Activated CD4-positive, alpha-beta memory T cell treated with anti-CD3 and anti-CD28 coated beads for 36 hours (primary cell): ENCODE measurements at regions of chr5 and their contacts with region 1.

Region 1: GRCh38 chr5:80754900-80755299 is 100.1 kb upstream of the DHFR start:
- DNase-seq: peak; percentile 66
- H3K4me3 Mint-ChIP-seq: peak overlapping the region; percentile 45
- H3K27ac Mint-ChIP-seq: peak overlapping the region; percentile 71
- H3K4me1 Mint-ChIP-seq: peaks cover 54% of the 10 kb centered on the region
- H3K27me3 Mint-ChIP-seq: no peaks in the 10 kb centered on the region

Region 2: DNA sequence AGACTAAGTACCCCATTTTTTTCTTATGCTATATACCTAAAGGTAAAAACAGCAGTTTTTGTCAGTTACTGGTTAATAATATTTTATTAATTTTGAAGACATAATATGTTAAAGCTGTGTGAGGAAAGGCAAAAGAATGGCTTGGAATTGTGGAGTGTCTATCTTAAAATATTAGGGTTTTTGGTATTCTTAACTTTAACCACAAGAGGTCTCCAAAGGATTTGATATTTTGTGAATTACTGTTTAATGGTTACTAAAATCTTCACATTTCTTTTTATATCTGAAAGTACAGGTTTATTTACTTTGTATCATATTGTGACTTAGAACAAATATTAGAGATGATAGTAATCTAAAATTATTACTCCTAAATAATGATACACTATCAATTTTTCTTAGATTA is 68.1 kb before region 1 on chr5:
- CTCF ChIA-PET with region 1: no interaction called
- POLR2A ChIA-PET with region 1: no interaction called
- intact Hi-C with region 1: loop called (anchors 2 kb)
- DNase-seq: no peak
- H3K4me3 Mint-ChIP-seq: no peak overlapping the region
- H3K27ac Mint-ChIP-seq: no peak overlapping the region
- H3K4me1 Mint-ChIP-seq: peaks cover 17% of the 10 kb centered on the region
- H3K27me3 Mint-ChIP-seq: no peaks in the 10 kb centered on the region

Region 3: DNA sequence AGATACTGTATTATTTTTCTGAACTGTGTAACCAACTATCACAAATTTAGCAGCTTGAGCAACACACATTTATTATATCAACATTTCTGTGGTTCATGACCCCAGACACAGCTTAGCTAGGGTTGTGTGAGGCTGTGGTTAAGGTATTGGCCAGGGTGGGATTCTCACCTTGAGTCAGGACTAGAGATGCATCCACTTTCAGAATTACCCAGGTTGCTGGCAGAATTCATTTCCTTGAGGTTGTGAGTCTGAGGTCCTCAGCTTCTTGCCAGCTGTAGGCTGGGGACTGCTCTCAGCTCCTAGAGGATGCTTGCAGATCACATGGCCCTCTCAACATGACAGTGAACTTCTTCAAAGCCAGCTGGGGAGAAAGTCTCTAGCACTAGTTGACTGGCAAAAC is 82.8 kb after region 1 on chr5:
- CTCF ChIA-PET with region 1: no interaction called
- POLR2A ChIA-PET with region 1: no interaction called
- intact Hi-C with region 1: no loop called
- DNase-seq: peak; percentile 40
- H3K4me3 Mint-ChIP-seq: no peak overlapping the region
- H3K27ac Mint-ChIP-seq: no peak overlapping the region
- H3K4me1 Mint-ChIP-seq: peaks cover 20% of the 10 kb centered on the region
- H3K27me3 Mint-ChIP-seq: no peaks in the 10 kb centered on the region

Region 4: GRCh38 chr5:80864706-80865435 is 110.0 kb after region 1 on chr5:
- CTCF ChIA-PET with region 1: no interaction called
- POLR2A ChIA-PET with region 1: interaction called, 3 read pairs
- intact Hi-C with region 1: loop called (anchors 2 kb)
- DNase-seq: peak; percentile 41
- H3K4me3 Mint-ChIP-seq: no peak overlapping the region
- H3K27ac Mint-ChIP-seq: no peak overlapping the region
- H3K4me1 Mint-ChIP-seq: peaks cover 48% of the 10 kb centered on the region
- H3K27me3 Mint-ChIP-seq: no peaks in the 10 kb centered on the region

Region 5: GRCh38 chr5:80960531-80961375 is 205.9 kb after region 1 on chr5:
- CTCF ChIA-PET with region 1: no interaction called
- POLR2A ChIA-PET with region 1: no interaction called
- intact Hi-C with region 1: loop called (anchors 1 kb)
- DNase-seq: peak; percentile 60
- H3K4me3 Mint-ChIP-seq: peak overlapping the region; percentile 81
- H3K27ac Mint-ChIP-seq: peak overlapping the region; percentile 56
- H3K4me1 Mint-ChIP-seq: peaks cover 55% of the 10 kb centered on the region
- H3K27me3 Mint-ChIP-seq: peaks cover 6% of the 10 kb centered on the region

Region 6: GRCh38 chr5:81006947-81007636 is 252.2 kb after region 1 on chr5:
- CTCF ChIA-PET with region 1: no interaction called
- POLR2A ChIA-PET with region 1: interaction called, 3 read pairs
- intact Hi-C with region 1: loop called (anchors 2 kb)
- DNase-seq: peak; percentile 66
- H3K4me3 Mint-ChIP-seq: peak overlapping the region; percentile 76
- H3K27ac Mint-ChIP-seq: peak overlapping the region; percentile 96
- H3K4me1 Mint-ChIP-seq: peaks cover 69% of the 10 kb centered on the region
- H3K27me3 Mint-ChIP-seq: no peaks in the 10 kb centered on the region